IMR-90 (cell line): ENCODE measurements at regions of chr16 and their contacts with region 1.

Region 1: GRCh38 chr16:53266156-53266555 is 168.1 kb upstream of the RBL2 start:
- DNase-seq: no peak
- ATAC-seq: no peak
- H3K4me3 ChIP-seq: no peak overlapping the region
- H3K27ac ChIP-seq: no peak overlapping the region
- H3K4me1 ChIP-seq: no peaks in the 10 kb centered on the region
- H3K27me3 ChIP-seq: no peaks in the 10 kb centered on the region
- CTCF ChIP-seq: no peak
- POLR2A ChIP-seq: no peak
- RAD21 ChIP-seq: no peak

Region 2: DNA sequence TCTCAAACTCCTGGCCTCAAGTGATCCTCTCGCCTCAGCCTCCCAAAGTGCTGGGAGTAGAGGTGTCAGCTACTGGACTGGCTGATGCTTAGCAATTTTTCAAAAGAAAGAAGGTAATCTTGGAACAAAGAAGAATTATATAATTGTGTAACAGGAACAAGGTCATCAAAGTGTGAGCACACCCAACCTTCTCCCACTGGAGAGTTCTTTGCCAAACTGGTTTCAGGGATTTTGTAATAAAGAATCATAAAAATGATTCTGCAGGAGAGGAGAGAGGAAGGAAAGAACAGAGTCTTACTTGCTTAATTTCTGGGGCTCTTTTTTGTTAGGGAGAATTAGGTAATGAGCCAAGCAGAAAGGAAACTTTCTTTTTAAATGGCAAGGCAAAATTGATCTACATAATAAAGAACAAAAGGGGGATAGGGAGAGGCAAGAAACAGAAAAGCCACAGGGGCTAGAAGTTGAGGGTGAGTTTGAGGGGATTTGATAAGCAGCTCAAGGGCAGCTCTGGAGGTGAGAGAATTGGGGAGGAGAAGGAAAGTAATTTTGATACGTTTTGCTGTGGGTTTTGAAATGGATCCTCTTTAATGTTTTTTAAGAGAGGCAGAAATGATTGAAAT is 234.7 kb before region 1 on chr16:
- CTCF ChIA-PET with region 1: no interaction called
- POLR2A ChIA-PET with region 1: no interaction called
- dilution Hi-C with region 1: no loop called
- in situ Hi-C with region 1: no loop called
- intact Hi-C with region 1: no loop called
- DNase-seq: no peak
- ATAC-seq: no peak
- H3K4me3 ChIP-seq: no peak overlapping the region
- H3K27ac ChIP-seq: no peak overlapping the region
- H3K4me1 ChIP-seq: peaks cover 2% of the 10 kb centered on the region; the same call in 1 of the 2 replicates
- H3K27me3 ChIP-seq: no peaks in the 10 kb centered on the region
- CTCF ChIP-seq: no peak
- POLR2A ChIP-seq: no peak
- RAD21 ChIP-seq: no peak

Region 3: DNA sequence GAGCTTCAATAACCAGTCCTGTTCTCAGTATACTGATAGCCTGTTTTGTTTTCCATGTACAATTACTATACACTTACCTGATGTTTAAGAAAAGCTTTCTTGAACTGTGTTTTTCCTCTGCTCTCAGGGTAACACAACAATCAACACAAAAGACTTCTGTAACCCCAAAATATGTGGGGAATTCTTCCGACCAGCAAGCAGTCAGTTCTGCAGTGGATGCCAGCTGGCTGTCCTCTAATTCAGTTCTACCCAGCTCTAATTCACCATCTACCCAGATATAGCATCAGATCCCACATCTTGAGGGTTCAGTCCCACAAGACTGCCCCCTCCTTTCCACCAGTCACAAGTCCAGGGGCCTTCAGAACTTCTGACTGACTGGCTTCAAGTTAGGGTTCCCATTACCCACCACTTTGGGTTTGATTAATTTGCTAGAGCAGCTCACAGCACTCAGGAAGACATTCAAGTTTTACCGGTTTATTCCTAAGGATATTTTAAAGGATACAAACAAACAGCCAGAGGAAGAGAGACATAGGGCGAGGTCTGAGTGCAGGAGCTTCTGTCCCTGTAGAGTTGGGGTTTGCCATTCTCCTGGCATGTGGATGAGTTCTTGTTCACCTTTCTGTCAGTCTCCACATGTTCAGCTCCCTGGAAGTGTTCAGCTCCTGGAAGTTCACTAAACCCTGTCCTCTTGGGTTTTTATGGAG is 33.2 kb before region 1 on chr16:
- CTCF ChIA-PET with region 1: no interaction called
- POLR2A ChIA-PET with region 1: interaction called, 5 read pairs
- dilution Hi-C with region 1: no loop called
- in situ Hi-C with region 1: no loop called
- intact Hi-C with region 1: loop called (anchors 5 kb)
- DNase-seq: no peak
- ATAC-seq: peak; percentile 36
- H3K4me3 ChIP-seq: no peak overlapping the region
- H3K27ac ChIP-seq: peak overlapping the region; percentile 19; the same call in 1 of the 2 replicates
- H3K4me1 ChIP-seq: peaks cover 6% of the 10 kb centered on the region
- H3K27me3 ChIP-seq: no peaks in the 10 kb centered on the region
- CTCF ChIP-seq: no peak
- POLR2A ChIP-seq: no peak
- RAD21 ChIP-seq: no peak

Region 4: GRCh38 chr16:53297477-53297876 is 31.3 kb after region 1 on chr16:
- CTCF ChIA-PET with region 1: no interaction called
- POLR2A ChIA-PET with region 1: no interaction called
- dilution Hi-C with region 1: no loop called
- in situ Hi-C with region 1: no loop called
- intact Hi-C with region 1: no loop called
- DNase-seq: no peak
- ATAC-seq: no peak
- H3K4me3 ChIP-seq: no peak overlapping the region
- H3K27ac ChIP-seq: no peak overlapping the region
- H3K4me1 ChIP-seq: no peaks in the 10 kb centered on the region
- H3K27me3 ChIP-seq: no peaks in the 10 kb centered on the region
- CTCF ChIP-seq: no peak
- POLR2A ChIP-seq: no peak
- RAD21 ChIP-seq: no peak

Region 5: GRCh38 chr16:53309457-53309856 is 43.3 kb after region 1 on chr16:
- CTCF ChIA-PET with region 1: no interaction called
- POLR2A ChIA-PET with region 1: no interaction called
- dilution Hi-C with region 1: no loop called
- in situ Hi-C with region 1: no loop called
- intact Hi-C with region 1: loop called (anchors 5 kb)
- DNase-seq: no peak
- ATAC-seq: no peak
- H3K4me3 ChIP-seq: no peak overlapping the region
- H3K27ac ChIP-seq: no peak overlapping the region
- H3K4me1 ChIP-seq: no peaks in the 10 kb centered on the region
- H3K27me3 ChIP-seq: no peaks in the 10 kb centered on the region
- CTCF ChIP-seq: no peak
- POLR2A ChIP-seq: no peak
- RAD21 ChIP-seq: no peak